Left ventricle myocardium superior (tissue), 1 donor: ENCODE measurements at regions of chr1 and their contacts with region 1.

Region 1: DNA sequence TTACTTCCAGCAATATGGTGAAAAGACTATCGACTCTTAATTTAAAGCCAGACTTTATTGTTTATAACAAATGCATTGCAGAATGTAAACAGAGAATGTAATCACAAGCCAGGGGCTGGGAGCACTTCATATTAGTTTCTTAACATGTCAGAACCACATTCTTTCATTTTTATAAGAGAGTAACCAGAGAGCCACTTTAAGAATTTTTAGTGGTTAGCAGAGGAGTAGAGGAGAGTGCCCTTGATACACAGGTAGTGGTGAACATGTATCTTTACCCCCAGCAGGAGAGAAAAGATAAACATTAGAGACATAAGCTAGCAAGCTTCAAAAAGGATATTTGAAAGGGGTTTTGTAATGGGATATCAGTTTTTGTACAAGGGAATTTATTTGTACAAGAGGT is 11.1 kb downstream of the AMY2B start:
- DNase-seq: no peak
- ATAC-seq: no peak

Region 2: DNA sequence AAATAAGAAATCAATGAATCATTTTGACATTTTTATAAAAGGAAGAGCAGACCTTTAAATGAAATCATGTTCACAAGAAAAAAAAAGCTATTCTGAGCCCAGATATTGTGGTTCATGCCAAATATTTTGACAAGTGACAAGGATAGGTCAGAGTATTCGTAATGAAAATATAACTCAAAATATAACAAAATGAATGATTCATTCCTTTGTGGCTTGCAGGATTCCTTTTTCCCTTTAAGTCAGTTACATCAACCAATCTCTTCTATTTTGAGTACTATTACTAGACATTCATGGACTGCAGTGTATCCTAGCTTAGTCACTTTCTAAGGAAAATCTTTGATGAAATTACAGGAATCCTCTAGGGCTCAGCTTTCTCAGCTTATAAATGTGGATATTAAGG is 662.8 kb before region 1 on chr1:
- intact Hi-C with region 1: no loop called
- DNase-seq: no peak
- ATAC-seq: no peak

Region 3: GRCh38 chr1:103489935-103490334 is 92.5 kb before region 1 on chr1:
- intact Hi-C with region 1: no loop called
- DNase-seq: no peak
- ATAC-seq: no peak

Region 4: DNA sequence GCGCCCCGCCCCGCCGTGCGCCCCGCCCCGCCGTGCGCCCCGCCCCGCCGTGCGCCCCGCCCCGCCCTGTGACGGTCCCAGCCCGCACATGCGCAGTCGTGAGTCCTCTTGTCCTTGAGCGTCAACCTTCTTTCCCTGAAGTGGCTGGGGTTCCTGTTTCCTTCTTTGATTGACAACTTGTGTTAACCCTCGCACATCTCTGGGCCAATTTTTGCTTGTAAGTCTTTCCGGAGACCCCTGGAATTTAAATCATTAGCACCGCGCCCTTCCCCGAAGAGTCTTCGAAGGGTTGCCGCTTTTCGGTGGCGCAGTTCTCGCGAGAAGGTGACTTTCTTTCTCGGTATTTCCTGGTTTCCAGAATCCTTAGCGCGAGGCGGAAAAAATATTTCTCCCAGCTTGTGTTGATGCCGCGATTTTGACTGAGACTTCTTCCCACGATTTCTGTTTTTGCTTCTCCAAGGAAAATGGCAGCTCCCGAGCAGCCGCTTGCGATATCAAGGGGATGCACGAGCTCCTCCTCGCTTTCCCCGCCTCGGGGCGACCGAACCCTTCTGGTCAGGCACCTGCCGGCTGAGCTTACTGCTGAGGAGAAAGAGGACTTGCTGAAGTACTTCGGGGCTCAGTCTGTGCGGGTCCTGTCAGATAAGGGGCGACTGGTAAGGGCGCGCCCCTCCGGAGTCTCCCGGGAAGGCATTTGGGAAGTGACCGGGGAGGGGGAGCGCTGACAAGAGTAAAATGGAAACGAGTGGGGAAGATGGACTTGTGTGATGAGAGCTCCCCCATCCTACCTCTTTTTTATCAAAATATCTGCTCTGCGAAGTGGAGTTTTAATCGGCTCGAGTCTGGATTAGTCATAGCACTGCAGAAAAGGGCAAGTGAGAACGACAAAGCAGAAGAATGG is 56.6 kb before region 1 on chr1 and contains the start of gene RNPC3:
- intact Hi-C with region 1: no loop called
- DNase-seq: peak; percentile 94
- ATAC-seq: peak; percentile 94
- total RNA-seq, gene RNPC3: 18.1 TPM

Region 5: DNA sequence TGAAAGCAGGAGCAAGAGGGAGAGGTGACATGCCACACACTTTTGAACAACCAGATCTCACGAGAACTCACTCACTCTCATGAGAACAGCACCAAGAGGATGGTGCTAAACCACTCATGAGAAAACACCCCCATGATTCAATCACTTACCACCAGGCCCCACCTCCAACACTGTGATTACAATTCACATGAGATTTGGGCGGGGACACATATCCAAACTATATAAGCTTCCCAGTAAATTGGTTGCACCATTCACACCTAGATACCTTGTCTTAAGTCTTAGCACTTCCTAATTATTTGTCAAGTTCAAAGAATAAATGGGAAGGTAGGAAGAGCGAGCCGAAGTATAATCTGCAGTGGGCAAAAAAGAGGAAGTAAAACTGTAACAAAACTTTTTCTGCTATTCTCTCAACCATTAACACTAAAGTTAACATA is 201.5 kb after region 1 on chr1:
- intact Hi-C with region 1: loop called (anchors 5 kb)
- DNase-seq: no peak
- ATAC-seq: no peak